Calu3 (cell line): ENCODE measurements at regions of chr3 and their contacts with region 1.

Region 1: DNA sequence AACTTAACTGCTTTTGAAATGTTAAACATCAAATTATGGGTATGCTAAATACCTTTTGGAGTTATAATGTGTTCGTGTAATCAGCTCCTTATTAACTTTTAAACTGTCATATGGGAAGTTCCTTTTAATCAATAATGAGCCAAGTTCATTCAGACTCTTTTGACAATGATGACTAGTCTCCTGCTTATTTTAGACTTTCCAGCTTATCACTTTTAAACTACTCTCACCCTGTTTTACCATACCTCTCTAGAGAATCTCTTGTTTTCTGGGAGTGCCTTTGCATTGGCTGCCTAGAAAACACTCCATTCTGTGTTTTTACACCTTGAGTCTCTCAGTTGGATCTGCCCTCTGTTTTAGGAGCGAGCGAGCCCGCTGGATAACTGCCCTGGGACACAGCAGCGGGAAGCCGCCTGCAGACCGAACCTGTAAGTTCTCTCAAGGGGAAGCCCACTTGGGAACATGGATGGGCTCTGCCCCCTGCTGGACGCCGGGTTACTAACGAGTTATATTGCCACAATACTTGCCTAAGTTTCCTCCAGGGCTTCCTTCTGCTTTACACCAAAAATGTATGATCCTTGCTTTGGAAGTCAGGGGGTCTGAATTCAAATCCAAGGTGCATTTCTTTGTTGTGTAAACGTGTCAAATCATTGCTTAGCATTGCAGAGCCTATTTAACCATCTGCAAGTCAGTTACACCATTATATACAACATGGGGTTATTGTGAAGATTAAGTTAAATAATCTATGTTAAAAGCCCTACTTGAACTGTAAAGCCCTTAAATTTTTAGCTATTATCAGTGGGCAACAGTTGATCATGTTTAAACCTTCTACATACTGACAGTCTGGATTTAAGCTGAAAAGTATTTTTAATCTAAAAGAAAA is 71.3 kb downstream of the DHX36 start:
- DNase-seq: peak; percentile 96
- H3K4me3 Mint-ChIP-seq: peak overlapping the region; percentile 10
- H3K27ac Mint-ChIP-seq: peak overlapping the region; percentile 1
- H3K4me1 Mint-ChIP-seq: peaks cover 39% of the 10 kb centered on the region
- H3K27me3 Mint-ChIP-seq: no peaks in the 10 kb centered on the region
- CTCF ChIP-seq: peak; percentile 99

Region 2: DNA sequence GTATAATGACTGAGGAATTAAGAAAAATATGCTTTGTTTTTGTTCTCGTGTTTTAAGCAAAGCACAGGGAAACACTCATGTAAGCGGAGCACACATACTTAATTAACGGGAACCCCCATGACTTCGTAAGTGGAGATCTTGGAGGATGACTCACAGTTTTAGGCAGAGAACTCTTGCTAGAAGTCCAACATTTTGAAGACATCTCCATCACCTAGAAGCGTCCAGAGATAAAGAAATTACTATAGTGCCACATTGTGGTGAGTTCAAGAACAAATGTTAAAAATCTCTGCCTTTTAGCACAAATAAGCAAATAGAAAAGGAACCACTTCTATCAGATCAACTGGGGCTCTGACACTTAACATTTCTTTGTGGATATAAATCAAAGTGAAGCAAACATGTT is 325.9 kb before region 1 on chr3:
- CTCF ChIA-PET with region 1: no interaction called
- intact Hi-C with region 1: no loop called
- DNase-seq: no peak
- H3K4me3 Mint-ChIP-seq: no peak overlapping the region
- H3K27ac Mint-ChIP-seq: no peak overlapping the region
- H3K4me1 Mint-ChIP-seq: no peaks in the 10 kb centered on the region
- H3K27me3 Mint-ChIP-seq: no peaks in the 10 kb centered on the region
- CTCF ChIP-seq: peak; percentile 38

Region 3: GRCh38 chr3:154023148-154023547 is 229.9 kb before region 1 on chr3:
- CTCF ChIA-PET with region 1: interaction called, 5 read pairs
- intact Hi-C with region 1: loop called (anchors 5 kb)
- DNase-seq: peak; percentile 57
- H3K4me3 Mint-ChIP-seq: no peak overlapping the region
- H3K27ac Mint-ChIP-seq: peak overlapping the region; percentile 25
- H3K4me1 Mint-ChIP-seq: peaks cover 14% of the 10 kb centered on the region
- H3K27me3 Mint-ChIP-seq: no peaks in the 10 kb centered on the region
- CTCF ChIP-seq: no peak

Region 4: GRCh38 chr3:154040286-154040685 is 212.7 kb before region 1 on chr3:
- CTCF ChIA-PET with region 1: no interaction called
- intact Hi-C with region 1: loop called (anchors 1 kb)
- DNase-seq: peak; percentile 26
- H3K4me3 Mint-ChIP-seq: no peak overlapping the region
- H3K27ac Mint-ChIP-seq: no peak overlapping the region
- H3K4me1 Mint-ChIP-seq: no peaks in the 10 kb centered on the region
- H3K27me3 Mint-ChIP-seq: no peaks in the 10 kb centered on the region
- CTCF ChIP-seq: peak; percentile 69

Region 5: DNA sequence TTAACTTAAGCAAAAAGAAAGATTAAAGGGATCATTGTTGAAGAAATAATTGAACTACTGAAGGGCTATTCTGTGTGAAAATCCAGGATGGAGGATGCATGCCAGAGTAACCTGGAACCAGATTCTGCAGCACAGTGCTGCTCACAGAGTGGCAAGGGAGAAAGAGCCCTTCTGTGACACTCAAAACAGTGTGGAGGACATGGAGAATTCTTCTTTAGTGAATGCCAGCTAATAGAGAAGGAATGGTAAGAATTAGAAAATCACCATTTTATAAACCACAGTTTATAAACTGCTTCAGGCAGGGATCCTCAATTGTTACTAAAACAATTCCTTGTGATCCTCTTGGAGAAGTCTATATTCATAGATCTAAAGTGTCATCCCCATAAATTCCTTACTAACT is 202.2 kb before region 1 on chr3:
- CTCF ChIA-PET with region 1: no interaction called
- intact Hi-C with region 1: no loop called
- DNase-seq: no peak
- H3K4me3 Mint-ChIP-seq: no peak overlapping the region
- H3K27ac Mint-ChIP-seq: no peak overlapping the region
- H3K4me1 Mint-ChIP-seq: no peaks in the 10 kb centered on the region
- H3K27me3 Mint-ChIP-seq: no peaks in the 10 kb centered on the region
- CTCF ChIP-seq: no peak

Region 6: GRCh38 chr3:154095832-154096421 is 157.1 kb before region 1 on chr3:
- CTCF ChIA-PET with region 1: interaction called, 7 read pairs
- intact Hi-C with region 1: loop called (anchors 1 kb)
- DNase-seq: no peak
- H3K4me3 Mint-ChIP-seq: no peak overlapping the region
- H3K27ac Mint-ChIP-seq: no peak overlapping the region
- H3K4me1 Mint-ChIP-seq: no peaks in the 10 kb centered on the region
- H3K27me3 Mint-ChIP-seq: no peaks in the 10 kb centered on the region
- CTCF ChIP-seq: peak; percentile 66

Region 7: DNA sequence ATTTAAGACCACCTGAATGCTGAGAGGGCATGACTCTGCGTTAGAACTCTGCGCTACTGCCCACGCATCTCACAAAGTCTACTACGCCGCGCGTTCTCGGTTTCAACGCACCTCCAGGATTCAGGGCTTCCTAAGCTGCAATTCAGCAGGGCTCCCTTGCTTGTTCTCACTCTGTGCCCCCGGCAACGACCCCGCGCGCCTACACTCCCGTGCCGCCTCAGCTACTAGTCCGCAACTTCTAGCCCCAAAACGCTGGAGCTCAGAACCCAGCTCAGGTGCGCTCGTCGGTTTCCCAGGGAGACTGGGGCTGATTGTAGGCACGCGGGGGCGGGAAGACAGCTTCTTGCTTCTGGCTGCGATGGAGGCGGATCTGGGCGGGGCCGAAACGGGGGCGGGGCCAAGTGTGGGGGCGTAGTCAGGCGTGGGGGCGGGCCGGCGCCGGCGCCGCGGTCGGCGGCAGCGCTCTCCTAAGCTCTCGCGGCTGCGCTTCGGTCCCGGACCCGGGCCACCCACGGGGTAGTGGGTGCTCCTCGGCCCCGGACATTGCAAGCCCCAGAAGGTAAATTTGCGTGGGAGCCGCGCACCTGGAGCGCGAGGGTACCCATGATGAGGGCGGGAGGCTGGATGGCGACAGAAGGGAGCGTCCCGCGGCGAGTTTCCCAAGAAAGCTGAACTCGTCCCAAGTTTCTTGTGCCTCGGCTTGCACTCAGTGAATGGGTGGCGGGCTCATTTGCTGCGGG is 131.9 kb before region 1 on chr3 and contains the start of gene ARHGEF26:
- CTCF ChIA-PET with region 1: interaction called, 10 read pairs
- intact Hi-C with region 1: loop called (anchors 1 kb)
- DNase-seq: peak; percentile 97
- H3K4me3 Mint-ChIP-seq: peak within 1 kb of the TSS; percentile 75
- H3K27ac Mint-ChIP-seq: peak within 1 kb of the TSS; percentile 6
- H3K4me1 Mint-ChIP-seq: peaks cover 44% of the 10 kb centered on the region
- H3K27me3 Mint-ChIP-seq: no peaks in the 10 kb centered on the region
- CTCF ChIP-seq: no peak
- total RNA-seq, gene ARHGEF26: 19.0 and 21.4 TPM in 2 replicates

Region 8: GRCh38 chr3:154169796-154170110 is 83.2 kb before region 1 on chr3:
- CTCF ChIA-PET with region 1: interaction called, 5 read pairs
- intact Hi-C with region 1: loop called (anchors 5 kb)
- DNase-seq: no peak
- H3K4me3 Mint-ChIP-seq: peak overlapping the region; percentile 6
- H3K27ac Mint-ChIP-seq: no peak overlapping the region
- H3K4me1 Mint-ChIP-seq: peaks cover 23% of the 10 kb centered on the region
- H3K27me3 Mint-ChIP-seq: no peaks in the 10 kb centered on the region
- CTCF ChIP-seq: no peak

Region 9: GRCh38 chr3:154323891-154324738 is 71.1 kb after region 1 on chr3 and contains the start of gene DHX36:
- CTCF ChIA-PET with region 1: no interaction called
- intact Hi-C with region 1: no loop called
- DNase-seq: peak; percentile 92
- H3K4me3 Mint-ChIP-seq: peak within 1 kb of the TSS; percentile 87
- H3K27ac Mint-ChIP-seq: peak within 1 kb of the TSS; percentile 91
- H3K4me1 Mint-ChIP-seq: no peaks in the 10 kb centered on the region
- H3K27me3 Mint-ChIP-seq: no peaks in the 10 kb centered on the region
- CTCF ChIP-seq: no peak
- total RNA-seq, gene DHX36: 127 and 134 TPM in 2 replicates

Region 10: GRCh38 chr3:154862265-154862664 is 609.3 kb after region 1 on chr3:
- CTCF ChIA-PET with region 1: no interaction called
- intact Hi-C with region 1: no loop called
- DNase-seq: no peak
- H3K4me3 Mint-ChIP-seq: no peak overlapping the region
- H3K27ac Mint-ChIP-seq: no peak overlapping the region
- H3K4me1 Mint-ChIP-seq: no peaks in the 10 kb centered on the region
- H3K27me3 Mint-ChIP-seq: no peaks in the 10 kb centered on the region
- CTCF ChIP-seq: no peak